ENCODE measurements at regions of chr9 and their contacts with region 1.

Region 1: GRCh38 chr9:3240656-3241268 is 285.0 kb downstream of the RFX3 start:
- DNase-seq: peak; percentile 67
- H3K4me3 ChIP-seq: no peak overlapping the region
- H3K27ac ChIP-seq: no peak overlapping the region
- H3K4me1 ChIP-seq: no peaks in the 10 kb centered on the region
- H3K27me3 ChIP-seq: no peaks in the 10 kb centered on the region
- CTCF ChIP-seq: peak; percentile 77 to 88
- POLR2A ChIP-seq: no peak

Region 2: GRCh38 chr9:2857564-2858198 is 383.1 kb before region 1 on chr9:
- CTCF ChIA-PET with region 1: interaction called, 5 read pairs
- POLR2A ChIA-PET with region 1: no interaction called
- dilution Hi-C with region 1: no loop called
- intact Hi-C with region 1: loop called (anchors 10 kb)
- DNase-seq: peak; percentile 67
- H3K4me3 ChIP-seq: no peak overlapping the region
- H3K27ac ChIP-seq: no peak overlapping the region
- H3K4me1 ChIP-seq: no peaks in the 10 kb centered on the region
- H3K27me3 ChIP-seq: peaks cover 5 to 14% of the 10 kb centered on the region in 2 experiments
- CTCF ChIP-seq: peak; percentile 75 to 76
- POLR2A ChIP-seq: no peak

Region 3: DNA sequence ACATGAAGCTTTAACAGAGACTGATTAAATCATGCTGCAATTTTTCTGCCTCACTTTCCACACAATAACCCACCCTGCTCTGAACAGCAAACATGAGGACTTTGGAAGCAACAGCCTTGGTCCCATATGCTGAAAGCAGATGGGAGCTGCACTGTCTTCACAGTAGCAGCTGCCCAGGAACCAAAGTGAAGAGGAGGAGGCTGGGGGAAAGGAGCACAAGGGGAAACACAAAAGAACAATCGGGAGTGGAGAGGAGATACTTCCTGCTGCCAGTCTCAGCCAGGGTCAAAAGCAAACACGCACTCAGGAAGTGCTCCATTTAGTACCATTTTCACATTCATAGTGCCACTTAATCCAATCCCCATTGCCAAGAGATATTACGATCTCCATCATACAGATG is 213.6 kb before region 1 on chr9:
- CTCF ChIA-PET with region 1: no interaction called
- POLR2A ChIA-PET with region 1: no interaction called
- dilution Hi-C with region 1: no loop called
- intact Hi-C with region 1: no loop called
- DNase-seq: no peak
- H3K4me3 ChIP-seq: no peak overlapping the region
- H3K27ac ChIP-seq: no peak overlapping the region
- H3K4me1 ChIP-seq: no peaks in the 10 kb centered on the region
- H3K27me3 ChIP-seq: no peaks in the 10 kb centered on the region
- CTCF ChIP-seq: no peak
- POLR2A ChIP-seq: no peak

Region 4: GRCh38 chr9:3323714-3324113 is 83.0 kb after region 1 on chr9:
- CTCF ChIA-PET with region 1: interaction called, 15 read pairs
- POLR2A ChIA-PET with region 1: no interaction called
- dilution Hi-C with region 1: no loop called
- intact Hi-C with region 1: loop called (anchors 5 kb)
- DNase-seq: peak; percentile 38
- H3K4me3 ChIP-seq: no peak overlapping the region
- H3K27ac ChIP-seq: no peak overlapping the region
- H3K4me1 ChIP-seq: peaks cover 33% of the 10 kb centered on the region
- H3K27me3 ChIP-seq: no peaks in the 10 kb centered on the region
- CTCF ChIP-seq: no peak
- POLR2A ChIP-seq: no peak

Region 5: DNA sequence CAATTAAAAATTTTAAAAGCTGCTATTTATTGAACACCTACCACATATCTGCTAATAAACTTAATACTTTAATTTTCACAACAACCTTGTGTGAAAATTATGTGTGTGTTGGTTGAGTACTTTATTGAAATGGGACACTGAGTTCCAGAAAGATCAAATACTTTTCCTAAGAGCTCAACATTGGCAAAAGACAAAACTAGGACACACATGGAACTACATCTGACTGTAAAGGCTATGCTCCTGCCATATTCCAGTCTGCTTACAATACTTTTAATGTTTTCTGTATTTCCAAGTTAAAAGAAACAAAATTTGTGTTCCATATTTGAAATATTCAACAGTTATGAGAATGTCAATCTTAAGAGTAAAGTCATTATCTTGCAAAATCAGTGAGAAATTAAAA is 173.2 kb after region 1 on chr9:
- CTCF ChIA-PET with region 1: interaction called, 28 read pairs
- POLR2A ChIA-PET with region 1: no interaction called
- dilution Hi-C with region 1: no loop called
- intact Hi-C with region 1: no loop called
- DNase-seq: no peak
- H3K4me3 ChIP-seq: no peak overlapping the region
- H3K27ac ChIP-seq: no peak overlapping the region
- H3K4me1 ChIP-seq: no peaks in the 10 kb centered on the region
- H3K27me3 ChIP-seq: no peaks in the 10 kb centered on the region
- CTCF ChIP-seq: no peak
- POLR2A ChIP-seq: no peak

Region 6: GRCh38 chr9:3467593-3468219 is 226.9 kb after region 1 on chr9:
- CTCF ChIA-PET with region 1: interaction called, 26 read pairs
- POLR2A ChIA-PET with region 1: no interaction called
- dilution Hi-C with region 1: no loop called
- intact Hi-C with region 1: no loop called
- DNase-seq: peak; percentile 66
- H3K4me3 ChIP-seq: no peak overlapping the region
- H3K27ac ChIP-seq: no peak overlapping the region
- H3K4me1 ChIP-seq: peaks cover 13% of the 10 kb centered on the region
- H3K27me3 ChIP-seq: no peaks in the 10 kb centered on the region
- CTCF ChIP-seq: peak; percentile 94
- POLR2A ChIP-seq: no peak

Region 7: DNA sequence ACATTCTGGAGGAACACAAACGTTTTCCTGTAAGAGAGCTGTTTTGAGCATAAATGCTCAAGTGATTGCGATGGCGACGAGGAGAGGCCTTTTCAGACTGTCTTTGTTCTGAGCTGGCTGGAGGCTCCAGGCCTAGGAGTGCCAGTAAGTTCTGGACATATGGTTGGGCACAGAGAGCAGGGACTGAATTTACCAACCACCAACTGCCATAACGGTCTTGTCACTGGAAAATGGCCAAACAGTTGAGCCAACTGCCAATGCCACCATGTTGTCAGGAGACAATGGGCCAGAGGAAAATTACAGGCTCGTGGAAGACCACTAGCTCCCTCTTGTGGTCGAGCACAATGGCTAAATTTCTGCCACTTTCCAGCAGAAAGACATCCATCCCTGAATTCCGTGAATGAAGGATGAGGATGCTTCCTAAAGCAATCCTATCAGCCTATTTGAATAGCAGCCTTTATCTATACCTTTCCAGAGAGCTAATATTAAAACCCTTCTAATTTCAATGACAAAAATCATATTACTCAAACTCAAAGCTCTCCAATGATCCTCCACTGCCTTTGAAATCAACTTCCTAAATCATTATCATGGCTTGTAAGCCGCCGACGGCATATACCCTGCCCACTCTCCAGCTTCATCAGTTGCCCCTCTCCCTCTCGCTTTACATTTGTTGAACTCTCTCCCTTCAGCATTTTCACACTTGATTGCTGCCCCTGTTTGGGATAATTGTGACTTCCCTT is 1126.0 kb after region 1 on chr9:
- CTCF ChIA-PET with region 1: interaction called, 5 read pairs
- POLR2A ChIA-PET with region 1: no interaction called
- dilution Hi-C with region 1: no loop called
- intact Hi-C with region 1: loop called (anchors 5 kb)
- DNase-seq: peak; percentile 53
- H3K4me3 ChIP-seq: no peak overlapping the region
- H3K27ac ChIP-seq: no peak overlapping the region
- H3K4me1 ChIP-seq: no peaks in the 10 kb centered on the region
- H3K27me3 ChIP-seq: peaks cover 2 to 5% of the 10 kb centered on the region in 2 experiments
- CTCF ChIP-seq: peak; percentile 74 to 81
- POLR2A ChIP-seq: no peak

Measured in endothelial cell of umbilical vein (primary cell).